Right cardiac atrium (tissue), 5 donors: ENCODE measurements at regions of chr4 and their contacts with region 1.

Region 1: GRCh38 chr4:53490965-53491622 is 100.2 kb downstream of the LNX1 start:
- DNase-seq: peak in 1 of 3 donors; percentile 56
- ATAC-seq: peak; percentile 59 to 78
- H3K4me3 ChIP-seq: no peak overlapping the region
- H3K27ac ChIP-seq: peak overlapping the region; percentile 33
- H3K4me1 ChIP-seq: no peaks in the 10 kb centered on the region
- H3K27me3 ChIP-seq: no peaks in the 10 kb centered on the region

Region 2: DNA sequence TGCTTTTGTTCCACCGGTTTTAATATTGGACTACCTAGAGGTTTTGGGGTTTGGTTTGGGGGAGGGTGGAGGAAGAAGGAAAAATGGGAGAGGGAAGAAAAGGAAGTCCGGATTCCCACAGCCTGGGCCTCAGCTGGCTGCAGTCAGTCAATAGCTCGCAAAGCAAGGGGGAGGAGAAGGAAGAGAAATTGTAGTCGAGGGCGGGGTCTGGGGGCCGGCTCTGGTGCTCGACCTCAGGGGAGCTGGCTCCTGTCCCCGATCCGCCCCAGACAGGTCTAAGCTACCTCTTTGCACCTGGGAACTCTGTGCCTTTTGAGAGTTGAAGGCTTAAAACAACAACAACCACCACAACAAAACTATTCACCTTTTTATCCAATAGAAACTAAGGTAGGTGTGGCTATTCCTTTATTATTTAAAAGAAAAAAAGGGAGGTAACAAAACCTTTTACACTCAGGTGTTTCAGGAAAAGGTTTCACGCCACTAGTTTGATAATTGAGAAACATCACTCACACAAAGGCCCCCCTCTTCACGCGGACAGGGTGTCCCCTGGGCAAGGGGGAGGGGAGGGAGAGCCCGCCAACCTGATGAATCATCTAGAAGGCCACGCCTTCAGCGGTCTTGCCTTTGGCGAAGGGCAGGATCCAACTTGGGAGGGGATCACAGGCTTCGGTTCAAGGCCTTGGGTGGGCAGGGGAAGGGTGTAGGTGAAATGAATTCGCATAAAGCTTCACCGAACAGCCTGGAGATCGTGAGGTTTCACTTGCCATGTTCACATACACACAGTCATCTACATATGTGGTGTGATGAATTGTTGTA is 101.8 kb after region 1 on chr4:
- intact Hi-C with region 1: loop called in 1 of 4 experiments (anchors 10 kb)
- DNase-seq: peak; percentile 63 to 71 (median 68)
- ATAC-seq: peak; percentile 68 to 81
- H3K4me3 ChIP-seq: peak overlapping the region; percentile 27
- H3K27ac ChIP-seq: no peak overlapping the region
- H3K4me1 ChIP-seq: peaks cover 6% of the 10 kb centered on the region
- H3K27me3 ChIP-seq: no peaks in the 10 kb centered on the region

Region 3: GRCh38 chr4:53653484-53654053 is 162.5 kb after region 1 on chr4:
- intact Hi-C with region 1: loop called in 2 of 4 experiments (anchors 10 kb)
- DNase-seq: peak in 1 of 3 donors; percentile 37
- ATAC-seq: no peak
- H3K4me3 ChIP-seq: no peak overlapping the region
- H3K27ac ChIP-seq: peak overlapping the region; percentile 36
- H3K4me1 ChIP-seq: peaks cover 6% of the 10 kb centered on the region
- H3K27me3 ChIP-seq: no peaks in the 10 kb centered on the region

Region 4: GRCh38 chr4:53908661-53909078 is 417.6 kb after region 1 on chr4:
- intact Hi-C with region 1: loop called in 1 of 4 experiments (anchors 10 kb)
- DNase-seq: peak in 1 of 3 donors; percentile 28
- ATAC-seq: peak; percentile 94 to 95
- H3K4me3 ChIP-seq: peak overlapping the region; percentile 34
- H3K27ac ChIP-seq: no peak overlapping the region
- H3K4me1 ChIP-seq: peaks cover 3% of the 10 kb centered on the region
- H3K27me3 ChIP-seq: no peaks in the 10 kb centered on the region